ENCODE measurements at regions of chr14 and their contacts with region 1.

Region 1: DNA sequence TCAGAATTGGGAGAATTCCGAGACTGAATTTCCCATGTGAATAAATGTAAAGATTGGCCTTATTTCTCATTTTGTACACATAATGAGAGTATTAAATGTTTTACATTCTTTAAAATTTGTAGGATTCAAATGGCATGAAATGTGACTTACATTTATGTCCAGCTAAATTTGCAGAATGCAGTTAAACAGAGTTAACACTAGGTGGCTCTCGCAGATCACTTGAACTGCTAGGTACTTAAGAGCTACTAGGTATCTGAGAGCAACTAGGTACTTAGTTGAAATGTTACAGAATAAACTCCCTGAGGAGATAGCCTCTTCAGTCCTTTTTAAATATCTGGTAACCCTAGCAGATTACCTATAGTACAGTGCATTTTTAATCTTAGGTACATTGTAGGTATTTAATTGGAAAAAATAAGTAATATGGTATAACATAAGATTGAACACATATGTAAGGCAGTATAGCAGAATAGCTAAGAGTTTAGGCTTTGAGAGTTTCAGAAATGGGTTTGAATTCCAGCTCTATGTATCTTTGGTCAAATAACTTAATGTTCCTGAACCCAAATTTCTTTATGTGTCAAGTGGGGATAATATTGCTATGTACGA is 73.8 kb downstream of the KIAA0586 start:
- DNase-seq: peak in 1 of 2 experiments; percentile 41
- H3K4me3 ChIP-seq: no peak overlapping the region
- H3K4me3 Mint-ChIP-seq: no peak overlapping the region
- H3K27ac Mint-ChIP-seq: no peak overlapping the region
- H3K4me1 ChIP-seq: no peaks in the 10 kb centered on the region
- H3K4me1 Mint-ChIP-seq: no peaks in the 10 kb centered on the region
- H3K27me3 ChIP-seq: no peaks in the 10 kb centered on the region
- H3K27me3 Mint-ChIP-seq: no peaks in the 10 kb centered on the region
- CTCF ChIP-seq: peak; percentile 80 to 82

Region 2: DNA sequence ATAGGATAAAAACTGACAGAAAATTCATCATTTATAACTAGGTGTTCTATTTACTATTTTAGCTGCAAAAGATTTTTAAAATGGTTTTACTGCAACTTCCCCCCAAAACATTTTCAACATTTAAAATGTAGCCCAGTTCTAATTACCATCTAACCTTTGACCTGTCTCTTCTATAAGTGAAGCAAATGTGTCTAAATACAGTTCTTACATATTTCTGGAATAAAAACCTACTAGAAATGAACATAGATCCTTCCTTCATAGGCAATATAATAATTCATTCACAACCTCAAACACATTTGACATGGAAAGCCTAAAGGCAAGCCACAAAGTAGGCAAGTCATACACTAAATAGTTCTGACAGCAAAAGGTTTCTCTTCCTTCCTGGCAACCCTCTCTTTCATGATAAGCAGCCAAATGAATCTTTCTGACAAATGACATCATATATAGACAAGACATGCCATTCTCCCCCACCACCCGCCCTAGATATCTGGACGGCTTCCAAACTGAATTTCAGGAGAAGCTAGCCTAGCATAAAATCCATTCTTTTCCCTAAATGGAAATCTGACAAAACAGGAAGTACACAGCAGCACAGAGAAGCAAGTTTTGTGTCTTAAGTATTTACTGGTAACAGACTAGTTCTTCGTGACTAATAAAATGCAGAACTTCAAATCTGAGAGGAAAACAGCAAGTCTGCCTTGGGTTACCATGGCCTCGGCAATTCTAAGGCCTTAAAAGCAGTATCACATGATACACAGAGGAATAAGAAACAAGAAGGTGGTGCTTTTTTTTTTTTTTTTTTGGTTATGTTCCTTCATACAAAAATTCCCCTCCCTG is 220.1 kb before region 1 on chr14:
- CTCF ChIA-PET with region 1: no interaction called
- POLR2A ChIA-PET with region 1: no interaction called
- intact Hi-C with region 1: no loop called
- DNase-seq: no peak
- H3K4me3 ChIP-seq: no peak overlapping the region
- H3K4me3 Mint-ChIP-seq: no peak overlapping the region
- H3K27ac Mint-ChIP-seq: no peak overlapping the region
- H3K4me1 ChIP-seq: peaks cover 21% of the 10 kb centered on the region
- H3K4me1 Mint-ChIP-seq: peaks cover 29% of the 10 kb centered on the region
- H3K27me3 ChIP-seq: no peaks in the 10 kb centered on the region
- H3K27me3 Mint-ChIP-seq: no peaks in the 10 kb centered on the region
- CTCF ChIP-seq: no peak

Region 3: DNA sequence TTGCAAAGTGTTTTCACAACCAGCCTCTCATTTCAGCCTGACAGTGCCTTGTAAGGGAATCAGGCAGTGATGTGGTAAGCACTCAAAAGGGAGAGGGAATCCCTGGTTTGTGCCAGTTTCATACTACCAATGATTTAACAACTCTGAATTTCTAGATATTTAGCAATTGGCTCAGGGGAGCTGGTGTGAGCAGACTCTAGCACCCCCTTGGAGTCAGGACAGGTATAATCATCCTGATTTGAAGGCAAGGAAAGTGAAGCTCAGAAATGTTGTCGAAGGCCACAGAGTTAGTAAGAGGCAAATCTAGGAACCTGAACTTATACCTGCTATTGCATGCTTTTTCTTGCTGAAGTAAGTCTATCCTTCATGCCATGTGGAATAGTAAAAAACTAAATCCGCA is 73.3 kb after region 1 on chr14:
- CTCF ChIA-PET with region 1: interaction called, 18 read pairs
- POLR2A ChIA-PET with region 1: no interaction called
- intact Hi-C with region 1: loop called (anchors 2 kb)
- DNase-seq: no peak
- H3K4me3 ChIP-seq: no peak overlapping the region
- H3K4me3 Mint-ChIP-seq: no peak overlapping the region
- H3K27ac Mint-ChIP-seq: no peak overlapping the region
- H3K4me1 ChIP-seq: no peaks in the 10 kb centered on the region
- H3K4me1 Mint-ChIP-seq: no peaks in the 10 kb centered on the region
- H3K27me3 ChIP-seq: no peaks in the 10 kb centered on the region; the same call in 1 of the 2 replicates
- H3K27me3 Mint-ChIP-seq: peaks cover 8% of the 10 kb centered on the region
- CTCF ChIP-seq: peak in 1 of 2 experiments; percentile 12

Region 4: DNA sequence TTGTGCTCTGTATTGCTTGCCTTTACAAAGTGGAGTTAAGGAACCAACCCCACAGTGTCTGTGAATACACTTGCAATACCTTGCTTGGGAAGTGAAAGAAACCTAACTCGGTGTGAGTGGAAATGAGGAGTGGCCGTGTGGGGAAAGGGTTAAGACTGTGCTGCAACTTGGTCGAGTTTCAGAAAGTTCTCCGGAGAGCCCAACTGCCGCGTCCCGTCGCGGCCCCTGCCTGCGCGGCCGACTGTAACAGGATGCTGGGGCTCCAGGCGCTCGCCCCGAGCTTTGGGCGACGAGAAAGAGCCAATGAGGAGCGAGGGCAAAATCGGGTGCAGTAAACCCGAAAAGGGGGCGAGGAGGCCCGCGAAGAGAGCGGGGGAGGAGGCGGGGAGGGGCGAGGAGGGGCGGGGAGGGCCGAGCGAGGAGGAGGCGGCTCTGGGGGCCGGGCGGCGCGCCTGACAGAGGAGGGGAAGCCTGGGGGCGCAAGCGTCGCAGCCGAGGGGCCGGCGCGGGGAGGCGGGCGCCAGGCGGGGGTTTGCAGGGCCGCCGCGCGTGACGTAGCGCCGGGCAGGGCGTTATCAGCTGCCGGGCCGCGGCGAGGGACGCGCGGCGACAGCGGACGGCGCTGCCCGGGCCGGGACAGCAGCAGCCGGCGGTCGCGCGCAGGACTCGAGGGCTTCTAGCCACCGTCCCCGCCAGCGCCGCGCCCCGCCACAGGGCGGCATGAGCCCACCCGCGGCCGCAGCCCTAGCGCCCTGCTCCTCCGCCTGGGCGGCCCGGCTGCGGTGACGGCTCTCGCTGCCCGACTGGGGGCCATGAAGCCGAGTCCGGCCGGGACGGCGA is 136.3 kb after region 1 on chr14 and contains the start of gene DACT1:
- CTCF ChIA-PET with region 1: interaction called, 9 read pairs
- POLR2A ChIA-PET with region 1: no interaction called
- intact Hi-C with region 1: loop called (anchors 2 kb)
- DNase-seq: peak; percentile 44 to 55
- H3K4me3 ChIP-seq: peak within 1 kb of the TSS; percentile 40
- H3K4me3 Mint-ChIP-seq: peak within 1 kb of the TSS; percentile 84
- H3K27ac Mint-ChIP-seq: no peak within 1 kb of the TSS
- H3K4me1 ChIP-seq: peaks cover 8% of the 10 kb centered on the region; the same call in 1 of the 2 replicates
- H3K4me1 Mint-ChIP-seq: no peaks in the 10 kb centered on the region
- H3K27me3 ChIP-seq: no peaks in the 10 kb centered on the region; the same call in 1 of the 2 replicates
- H3K27me3 Mint-ChIP-seq: peaks cover 29% of the 10 kb centered on the region
- CTCF ChIP-seq: no peak
- total RNA-seq, gene DACT1: 0.23 and 0.74 TPM in 2 replicates

Region 5: GRCh38 chr14:59018978-59019377 is 517.7 kb after region 1 on chr14:
- CTCF ChIA-PET with region 1: interaction called, 9 read pairs
- POLR2A ChIA-PET with region 1: no interaction called
- intact Hi-C with region 1: loop called (anchors 1 kb)
- DNase-seq: peak in 1 of 2 experiments; percentile 11
- H3K4me3 ChIP-seq: no peak overlapping the region
- H3K4me3 Mint-ChIP-seq: no peak overlapping the region
- H3K27ac Mint-ChIP-seq: no peak overlapping the region
- H3K4me1 ChIP-seq: no peaks in the 10 kb centered on the region
- H3K4me1 Mint-ChIP-seq: no peaks in the 10 kb centered on the region
- H3K27me3 ChIP-seq: no peaks in the 10 kb centered on the region
- H3K27me3 Mint-ChIP-seq: peaks cover 2% of the 10 kb centered on the region
- CTCF ChIP-seq: peak; percentile 23 to 48